ENCODE measurements at regions of chr20 and their contacts with region 1.

Region 1: DNA sequence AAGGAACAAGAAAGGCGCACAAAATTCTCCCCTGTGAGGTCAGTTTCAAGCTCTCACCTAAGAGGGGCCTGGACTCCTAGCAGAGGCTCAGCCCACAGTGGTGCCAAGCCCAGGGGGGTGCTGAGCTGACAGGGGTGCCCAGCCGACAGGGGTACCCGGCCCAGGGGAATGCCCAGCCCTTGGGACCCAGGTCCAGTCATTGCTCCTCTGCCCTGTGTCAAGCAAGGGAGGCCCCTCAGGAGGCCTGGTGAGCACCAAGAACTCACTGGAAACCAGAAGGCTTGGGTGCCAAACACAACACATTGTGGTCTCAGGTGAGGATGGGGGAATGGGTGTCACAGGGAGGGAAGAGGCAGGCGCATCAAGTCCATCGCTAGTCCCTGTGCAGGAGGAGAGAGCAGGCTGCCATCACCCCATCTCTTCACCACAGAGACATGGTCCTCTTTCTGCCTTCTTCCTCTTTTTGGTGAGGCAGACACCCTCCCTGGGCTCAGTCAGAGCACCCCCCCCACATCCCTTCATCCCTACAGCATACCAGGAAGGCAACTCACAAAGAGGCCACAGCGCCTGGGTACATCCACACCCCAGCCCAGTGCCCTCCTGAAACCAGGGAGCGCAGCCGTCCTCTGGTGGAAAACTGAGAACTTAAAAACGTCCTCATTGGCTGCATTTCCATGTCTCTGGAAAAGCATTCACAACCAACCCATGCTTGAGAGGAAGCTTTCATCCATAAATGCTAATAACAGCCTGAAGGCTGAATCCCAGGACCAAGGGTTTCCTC is 111.3 kb downstream of the BANF2 start:
- DNase-seq: peak; percentile 53

Region 2: GRCh38 chr20:17825960-17826843 is 15.2 kb after region 1 on chr20:
- intact Hi-C with region 1: loop called in 1 of 2 experiments (anchors 1 kb)
- DNase-seq: peak; percentile 30

Region 3: GRCh38 chr20:17843246-17844132 is 32.5 kb after region 1 on chr20:
- intact Hi-C with region 1: no loop called
- DNase-seq: no peak